T-cell (primary cell): ENCODE measurements at regions of chr13 and their contacts with region 1.

Region 1: DNA sequence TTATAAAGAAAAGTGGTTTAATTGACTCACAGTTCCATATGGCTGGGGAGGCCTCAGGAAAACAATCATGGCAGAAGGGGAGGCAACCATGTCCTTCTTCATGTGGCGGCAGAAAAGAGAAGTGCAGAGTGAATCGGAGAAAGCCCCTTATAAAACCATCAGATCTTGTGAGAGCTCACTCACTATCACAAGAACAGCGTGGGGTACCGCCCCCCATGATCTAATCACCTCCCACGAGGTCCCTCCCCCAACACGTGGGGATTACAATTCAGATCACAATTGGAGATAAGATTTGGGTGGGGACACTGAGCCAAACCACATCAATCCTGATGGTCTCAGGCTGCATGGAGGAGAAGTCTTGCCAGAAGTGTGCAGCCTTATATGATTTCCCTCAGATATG is 26.0 kb downstream of the TM9SF2 start:
- DNase-seq: peak in 15 of 35 experiments; percentile 4 to 33 (median 16)
- ATAC-seq: peak in 3 of 4 experiments; percentile 40 to 53 (median 46)
- H3K4me3 ChIP-seq: no peak overlapping the region
- H3K4me3 Mint-ChIP-seq: peak overlapping the region in 1 of 3 donors; percentile 3
- H3K27ac ChIP-seq: no peak overlapping the region
- H3K27ac Mint-ChIP-seq: peak overlapping the region in 1 of 2 donors; percentile 45
- H3K4me1 ChIP-seq: peaks cover 2 to 18% of the 10 kb centered on the region in 2 experiments
- H3K4me1 Mint-ChIP-seq: peaks cover 44 to 60% (median 48%) of the 10 kb centered on the region in 3 donors
- H3K27me3 ChIP-seq: no peaks in the 10 kb centered on the region
- H3K27me3 Mint-ChIP-seq: no peaks in the 10 kb centered on the region

Region 2: DNA sequence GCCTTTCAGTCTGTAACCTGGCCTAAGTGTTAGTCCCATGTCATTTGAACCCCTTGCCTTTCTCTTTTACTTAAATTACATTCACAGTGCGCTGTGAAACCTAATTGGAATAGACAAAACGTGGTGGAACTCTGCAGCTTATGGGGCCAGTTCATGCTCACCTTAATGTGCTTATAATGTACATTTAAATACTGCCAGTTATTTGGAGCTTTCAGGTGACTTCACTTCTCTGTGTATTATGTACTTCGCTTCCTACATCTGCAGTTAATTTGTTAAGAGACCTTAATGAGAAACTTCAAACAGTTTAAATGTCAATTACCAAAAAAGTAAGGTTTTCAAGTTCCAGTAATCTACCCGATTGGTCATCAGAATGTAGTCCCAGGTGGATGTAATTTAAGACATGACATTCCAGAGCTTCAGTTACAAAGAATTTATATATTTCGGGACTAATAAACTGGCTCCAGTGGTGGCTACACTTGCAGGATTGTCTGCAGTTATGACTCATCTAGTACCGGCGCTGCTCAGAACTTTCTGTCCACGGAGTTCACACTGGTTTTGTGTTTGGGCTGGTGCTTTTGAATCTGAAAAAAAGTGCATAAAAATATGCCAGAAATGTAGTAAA is 99.3 kb after region 1 on chr13:
- CTCF ChIA-PET with region 1: no interaction called
- POLR2A ChIA-PET with region 1: no interaction called
- DNase-seq: no peak
- ATAC-seq: no peak
- H3K4me3 ChIP-seq: no peak overlapping the region
- H3K4me3 Mint-ChIP-seq: no peak overlapping the region
- H3K27ac ChIP-seq: no peak overlapping the region
- H3K27ac Mint-ChIP-seq: no peak overlapping the region
- H3K4me1 ChIP-seq: peaks cover 0 to 8% of the 10 kb centered on the region in 2 experiments
- H3K4me1 Mint-ChIP-seq: peaks cover 18 to 51% (median 19%) of the 10 kb centered on the region in 3 donors
- H3K27me3 ChIP-seq: no peaks in the 10 kb centered on the region
- H3K27me3 Mint-ChIP-seq: no peaks in the 10 kb centered on the region

Region 3: DNA sequence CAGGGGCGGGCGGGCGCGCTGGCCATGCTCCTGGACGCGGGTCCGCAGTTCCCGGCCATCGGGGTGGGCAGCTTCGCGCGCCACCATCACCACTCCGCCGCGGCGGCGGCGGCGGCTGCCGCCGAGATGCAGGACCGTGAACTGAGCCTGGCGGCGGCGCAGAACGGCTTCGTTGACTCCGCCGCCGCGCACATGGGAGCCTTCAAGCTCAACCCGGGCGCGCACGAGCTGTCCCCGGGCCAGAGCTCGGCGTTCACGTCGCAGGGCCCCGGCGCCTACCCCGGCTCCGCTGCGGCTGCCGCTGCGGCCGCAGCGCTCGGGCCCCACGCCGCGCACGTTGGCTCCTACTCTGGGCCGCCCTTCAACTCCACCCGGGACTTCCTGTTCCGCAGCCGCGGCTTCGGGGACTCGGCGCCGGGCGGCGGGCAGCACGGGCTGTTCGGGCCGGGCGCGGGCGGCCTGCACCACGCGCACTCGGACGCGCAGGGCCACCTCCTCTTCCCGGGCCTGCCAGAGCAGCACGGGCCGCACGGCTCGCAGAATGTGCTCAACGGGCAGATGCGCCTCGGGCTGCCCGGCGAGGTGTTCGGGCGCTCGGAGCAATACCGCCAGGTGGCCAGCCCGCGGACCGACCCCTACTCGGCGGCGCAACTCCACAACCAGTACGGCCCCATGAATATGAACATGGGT is 454.9 kb after region 1 on chr13:
- CTCF ChIA-PET with region 1: interaction called, 3 to 11 read pairs
- POLR2A ChIA-PET with region 1: no interaction called
- DNase-seq: peak in 1 of 35 experiments; percentile 50
- ATAC-seq: peak; percentile 22 to 39 (median 27)
- H3K4me3 ChIP-seq: peak overlapping the region in 1 of 2 donors; percentile 62
- H3K4me3 Mint-ChIP-seq: peak overlapping the region in 1 of 3 donors; percentile 58
- H3K27ac ChIP-seq: no peak overlapping the region
- H3K27ac Mint-ChIP-seq: no peak overlapping the region
- H3K4me1 ChIP-seq: peaks cover 2 to 58% of the 10 kb centered on the region in 2 experiments
- H3K4me1 Mint-ChIP-seq: peaks cover 20 to 31% (median 22%) of the 10 kb centered on the region in 3 donors
- H3K27me3 ChIP-seq: peaks cover 12 to 83% of the 10 kb centered on the region in 2 experiments
- H3K27me3 Mint-ChIP-seq: peaks cover 40 to 62% of the 10 kb centered on the region in 2 donors